ENCODE measurements at regions of chr9 and their contacts with region 1.

Region 1: DNA sequence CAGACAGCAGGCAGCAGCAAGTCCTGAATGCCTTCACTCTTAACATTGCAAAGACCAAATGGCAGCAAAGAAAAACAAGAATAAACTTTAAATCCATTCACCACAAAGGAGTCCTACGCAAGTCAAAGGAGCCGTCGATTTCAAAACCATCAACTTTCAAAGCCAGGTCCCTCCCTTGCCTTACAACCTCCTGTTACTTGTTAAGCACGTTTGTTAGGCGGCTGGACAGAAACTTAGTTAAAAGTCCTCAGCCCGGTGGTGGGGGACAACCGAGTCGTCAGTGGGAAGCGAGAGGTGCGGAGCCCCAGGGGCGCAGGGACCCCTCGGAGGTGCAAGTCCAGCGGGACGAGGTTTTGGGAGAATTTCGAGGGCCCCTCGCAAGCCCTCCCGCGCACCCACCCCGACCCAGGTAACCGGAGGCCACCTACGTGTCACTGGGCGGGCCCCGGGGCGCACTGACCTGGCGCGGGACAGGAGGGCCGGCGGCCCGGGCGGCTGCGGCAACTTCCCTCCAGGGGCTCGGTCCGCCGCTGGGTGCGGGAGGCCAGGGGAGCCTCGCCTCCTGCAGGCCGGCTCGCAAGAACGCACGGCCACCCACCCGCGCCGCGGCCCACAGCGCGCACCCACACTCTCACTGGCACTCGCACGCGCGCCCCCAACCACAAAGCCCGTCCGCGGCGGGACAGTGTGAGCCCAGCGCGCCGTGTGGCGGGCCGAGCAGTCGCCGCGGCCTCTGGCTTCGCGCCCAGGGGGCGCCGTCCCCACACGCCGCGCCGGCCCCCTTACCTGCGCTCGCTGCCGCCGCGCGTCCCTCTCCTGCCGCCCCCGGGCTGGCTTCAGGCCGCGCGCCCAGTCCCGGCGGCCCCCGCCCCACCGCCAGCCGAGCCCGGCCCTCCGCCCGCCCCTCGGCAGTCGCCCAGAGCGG is 627 bp downstream of the LPAR1 start:
- ATAC-seq: peak; percentile 16 to 90 (median 86)
- H3K4me3 ChIP-seq: peak overlapping the region; percentile 41 to 57 (median 50)
- H3K27ac ChIP-seq: no peak overlapping the region
- H3K4me1 ChIP-seq: peaks cover 4 to 14% of the 10 kb centered on the region in 2 donors

Region 2: DNA sequence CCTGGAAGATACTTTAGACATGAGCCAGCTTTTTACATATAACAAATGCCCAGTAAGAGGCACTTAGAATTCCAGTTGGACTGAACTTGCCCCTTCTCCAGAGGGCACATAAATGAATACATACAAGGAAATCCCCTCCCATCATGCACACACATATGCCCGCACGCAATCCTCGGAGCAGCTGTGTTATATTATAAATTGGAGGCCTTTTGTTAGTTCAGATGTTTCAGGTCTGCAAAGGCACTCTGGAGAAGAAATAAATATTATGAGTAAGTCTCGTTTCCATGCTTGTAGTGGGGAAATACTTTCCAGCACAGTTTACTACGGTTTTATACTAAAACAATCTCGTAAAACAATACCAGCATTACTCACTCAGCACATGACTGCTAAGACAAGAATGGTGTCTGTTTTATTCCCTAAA is 386.6 kb before region 1 on chr9:
- in situ Hi-C with region 1: loop called in 2 of 9 experiments (anchors 25 kb)
- ATAC-seq: peak; percentile 57 to 91 (median 72)
- H3K4me3 ChIP-seq: no peak overlapping the region
- H3K27ac ChIP-seq: no peak overlapping the region
- H3K4me1 ChIP-seq: no peaks in the 10 kb centered on the region

Measured in motor neuron (in vitro differentiated cells).